Activated naive CD4-positive, alpha-beta T cell treated with anti-CD3 and anti-CD28 coated beads, Interleukin-2, amount 10 ng/mL, durations not matched to agents 7 days and 5 days (primary cell): ENCODE measurements at regions of chr4 and their contacts with region 1.

Region 1: GRCh38 chr4:83217721-83218522 is 66.7 kb downstream of the COQ2 start:
- DNase-seq: peak; percentile 83
- H3K4me3 Mint-ChIP-seq: peak overlapping the region; percentile 71
- H3K27ac Mint-ChIP-seq: peak overlapping the region; percentile 96
- H3K4me1 Mint-ChIP-seq: peaks cover 89% of the 10 kb centered on the region
- H3K27me3 Mint-ChIP-seq: no peaks in the 10 kb centered on the region

Region 2: GRCh38 chr4:83174844-83175414 is 43.0 kb before region 1 on chr4:
- CTCF ChIA-PET with region 1: no interaction called
- DNase-seq: no peak
- H3K4me3 Mint-ChIP-seq: no peak overlapping the region
- H3K27ac Mint-ChIP-seq: no peak overlapping the region
- H3K4me1 Mint-ChIP-seq: peaks cover 12% of the 10 kb centered on the region
- H3K27me3 Mint-ChIP-seq: peaks cover 5% of the 10 kb centered on the region

Region 3: DNA sequence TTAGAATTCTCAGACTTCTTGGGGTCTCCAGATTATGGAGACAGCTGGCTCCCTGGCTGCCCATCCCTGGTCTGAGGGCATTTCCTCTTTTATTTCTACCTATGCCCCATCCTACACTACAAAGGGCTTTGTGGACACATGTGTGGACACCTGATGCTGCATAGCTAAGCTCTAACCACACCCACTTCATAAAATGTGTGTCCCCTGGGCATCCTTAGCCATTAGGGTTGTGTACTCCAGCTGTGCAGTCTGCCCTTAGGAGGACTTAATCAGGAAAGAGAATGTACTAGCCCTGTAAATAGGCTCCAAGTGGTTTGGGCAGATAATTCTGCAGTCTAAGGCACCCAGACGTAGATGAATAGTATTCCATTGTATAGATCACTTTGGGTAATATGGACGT is 19.7 kb after region 1 on chr4:
- CTCF ChIA-PET with region 1: interaction called, 18 read pairs
- DNase-seq: no peak
- H3K4me3 Mint-ChIP-seq: no peak overlapping the region
- H3K27ac Mint-ChIP-seq: no peak overlapping the region
- H3K4me1 Mint-ChIP-seq: peaks cover 72% of the 10 kb centered on the region
- H3K27me3 Mint-ChIP-seq: peaks cover 12% of the 10 kb centered on the region

Region 4: GRCh38 chr4:83252782-83253405 is 35.0 kb after region 1 on chr4:
- CTCF ChIA-PET with region 1: interaction called, 17 read pairs
- DNase-seq: peak; percentile 87
- H3K4me3 Mint-ChIP-seq: no peak overlapping the region
- H3K27ac Mint-ChIP-seq: no peak overlapping the region
- H3K4me1 Mint-ChIP-seq: peaks cover 38% of the 10 kb centered on the region
- H3K27me3 Mint-ChIP-seq: no peaks in the 10 kb centered on the region